ENCODE measurements at regions of chr10 and their contacts with region 1.

Region 1: GRCh38 chr10:23834070-23834469 is 374.9 kb upstream of the KIAA1217 start:
- DNase-seq: no peak
- H3K4me3 ChIP-seq: no peak overlapping the region
- H3K27ac ChIP-seq: no peak overlapping the region
- H3K4me1 ChIP-seq: no peaks in the 10 kb centered on the region
- H3K27me3 ChIP-seq: no peaks in the 10 kb centered on the region
- CTCF ChIP-seq: no peak

Region 2: DNA sequence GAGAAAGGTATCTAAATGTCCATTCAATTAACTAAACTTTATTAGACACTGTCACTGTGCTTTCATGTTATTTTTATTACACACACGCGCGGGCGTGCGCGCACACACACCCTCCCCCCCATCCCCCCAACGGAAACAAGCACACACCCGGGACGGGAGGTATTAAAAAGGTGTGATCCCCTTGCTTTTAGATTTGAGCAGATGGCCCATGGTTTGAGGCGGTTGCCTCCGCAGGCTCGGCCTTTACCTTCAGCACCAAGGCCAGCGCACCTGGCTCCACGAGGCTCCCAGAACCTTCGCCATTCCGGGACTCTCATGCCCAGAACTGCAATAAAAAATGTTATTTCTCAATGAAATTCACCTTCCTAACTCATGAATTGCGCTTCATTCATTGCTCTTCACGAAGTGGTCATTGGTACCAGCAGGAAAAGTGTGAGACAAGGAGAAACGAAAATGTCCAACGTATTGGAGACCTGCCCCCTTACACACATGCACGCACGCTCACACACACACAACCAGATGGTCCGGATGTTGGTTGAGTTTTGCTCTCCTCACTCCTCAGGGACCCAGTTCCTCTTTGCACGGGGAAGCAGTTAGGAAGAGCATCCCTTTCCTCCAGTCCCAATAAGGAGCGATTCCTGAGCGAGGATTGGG is 662.7 kb before region 1 on chr10:
- CTCF ChIA-PET with region 1: no interaction called
- dilution Hi-C with region 1: no loop called
- in situ Hi-C with region 1: no loop called
- intact Hi-C with region 1: no loop called
- DNase-seq: peak; percentile 39
- H3K4me3 ChIP-seq: no peak overlapping the region
- H3K27ac ChIP-seq: no peak overlapping the region
- H3K4me1 ChIP-seq: no peaks in the 10 kb centered on the region
- H3K27me3 ChIP-seq: peaks cover 29% of the 10 kb centered on the region
- CTCF ChIP-seq: no peak

Region 3: GRCh38 chr10:23676291-23676690 is 157.8 kb before region 1 on chr10:
- CTCF ChIA-PET with region 1: no interaction called
- dilution Hi-C with region 1: no loop called
- in situ Hi-C with region 1: no loop called
- intact Hi-C with region 1: no loop called
- DNase-seq: no peak
- H3K4me3 ChIP-seq: no peak overlapping the region
- H3K27ac ChIP-seq: no peak overlapping the region
- H3K4me1 ChIP-seq: no peaks in the 10 kb centered on the region
- H3K27me3 ChIP-seq: no peaks in the 10 kb centered on the region
- CTCF ChIP-seq: no peak

Region 4: GRCh38 chr10:23779301-23779700 is 54.8 kb before region 1 on chr10:
- CTCF ChIA-PET with region 1: no interaction called
- dilution Hi-C with region 1: loop called (anchors 5 kb)
- in situ Hi-C with region 1: no loop called
- intact Hi-C with region 1: no loop called
- DNase-seq: peak; percentile 1
- H3K4me3 ChIP-seq: no peak overlapping the region
- H3K27ac ChIP-seq: no peak overlapping the region
- H3K4me1 ChIP-seq: no peaks in the 10 kb centered on the region
- H3K27me3 ChIP-seq: no peaks in the 10 kb centered on the region
- CTCF ChIP-seq: no peak

Region 5: GRCh38 chr10:23897861-23898260 is 63.8 kb after region 1 on chr10:
- CTCF ChIA-PET with region 1: no interaction called
- dilution Hi-C with region 1: loop called (anchors 5 kb)
- in situ Hi-C with region 1: no loop called
- intact Hi-C with region 1: no loop called
- DNase-seq: no peak
- H3K4me3 ChIP-seq: no peak overlapping the region
- H3K27ac ChIP-seq: no peak overlapping the region
- H3K4me1 ChIP-seq: no peaks in the 10 kb centered on the region
- H3K27me3 ChIP-seq: no peaks in the 10 kb centered on the region
- CTCF ChIP-seq: no peak

Region 6: GRCh38 chr10:24027113-24027512 is 193.0 kb after region 1 on chr10:
- CTCF ChIA-PET with region 1: no interaction called
- dilution Hi-C with region 1: no loop called
- in situ Hi-C with region 1: no loop called
- intact Hi-C with region 1: no loop called
- DNase-seq: no peak
- H3K4me3 ChIP-seq: no peak overlapping the region
- H3K27ac ChIP-seq: no peak overlapping the region
- H3K4me1 ChIP-seq: no peaks in the 10 kb centered on the region
- H3K27me3 ChIP-seq: peaks cover 3% of the 10 kb centered on the region
- CTCF ChIP-seq: no peak